Naive thymus-derived CD8-positive, alpha-beta T cell (primary cell): ENCODE measurements at regions of chr2 and their contacts with region 1.

Region 1: DNA sequence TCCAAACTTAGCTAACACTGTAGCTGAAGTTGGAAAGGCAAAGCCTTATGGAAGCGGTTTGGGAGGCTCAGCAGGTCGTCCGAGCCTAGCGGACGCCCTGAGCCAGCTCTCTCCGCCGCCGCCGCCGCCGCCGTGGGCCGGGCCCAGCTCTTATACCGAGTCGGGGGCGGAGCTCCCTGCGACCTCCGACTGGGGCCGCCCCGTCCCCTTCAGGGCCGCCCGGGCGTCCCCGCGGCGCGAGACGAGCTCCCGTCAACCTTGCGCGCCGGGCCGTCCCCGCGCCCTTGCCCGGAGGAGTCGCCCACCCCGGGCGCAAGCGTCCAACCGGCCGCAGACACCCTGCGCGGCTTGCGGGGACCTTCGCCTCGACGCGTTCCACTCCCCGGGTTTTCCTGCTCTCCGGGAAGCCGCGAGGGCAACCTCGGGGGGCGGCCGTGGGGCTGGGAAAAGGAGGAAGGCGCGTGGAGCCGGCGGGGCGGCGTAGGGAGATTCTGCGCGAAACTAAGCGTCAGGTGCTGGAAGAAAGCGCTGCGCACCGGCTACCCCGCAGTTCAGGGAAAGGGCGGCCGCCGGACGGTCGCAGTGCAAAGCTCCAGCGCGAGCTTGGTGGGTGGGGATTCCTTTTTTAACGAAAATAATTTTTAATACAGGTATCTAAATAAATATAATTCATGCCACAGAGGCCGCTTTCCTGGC is at the start of gene SLC40A1:
- DNase-seq: peak; percentile 38 to 78 (median 62)
- ATAC-seq: peak; percentile 93 to 95
- H3K4me3 Mint-ChIP-seq: peak within 1 kb of the TSS; percentile 81 to 97 (median 90)
- H3K27ac Mint-ChIP-seq: peak within 1 kb of the TSS; percentile 32 to 94 (median 86)
- H3K4me1 Mint-ChIP-seq: peaks cover 20 to 38% (median 33%) of the 10 kb centered on the region in 4 donors
- H3K27me3 Mint-ChIP-seq: peaks cover 0 to 23% (median 8%) of the 10 kb centered on the region in 5 donors
- polyA plus RNA-seq, gene SLC40A1: 33.8 to 40.3 (median 37.4) TPM

Region 2: DNA sequence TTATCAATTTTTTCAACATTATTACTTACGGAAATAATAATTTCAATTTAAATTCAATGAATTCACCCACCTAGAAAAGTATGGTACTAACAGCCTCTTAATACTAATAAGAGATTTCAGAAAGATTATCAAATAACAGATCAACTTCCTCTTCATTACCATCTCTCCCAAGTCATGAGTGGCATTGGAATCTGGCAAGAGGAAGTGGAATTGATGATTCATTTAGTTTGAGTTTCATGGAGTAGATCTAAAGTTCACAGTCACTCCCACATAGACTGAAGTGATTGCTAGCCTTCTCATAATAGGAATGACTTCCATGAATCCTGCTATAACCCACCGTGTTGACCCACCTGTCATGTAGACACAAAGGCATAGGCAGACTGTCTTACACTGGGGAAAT is 217.2 kb before region 1 on chr2:
- POLR2A ChIA-PET with region 1: no interaction called
- DNase-seq: no peak
- ATAC-seq: no peak
- H3K4me3 Mint-ChIP-seq: no peak overlapping the region
- H3K27ac Mint-ChIP-seq: no peak overlapping the region
- H3K4me1 Mint-ChIP-seq: peaks cover 0 to 8% (median 2%) of the 10 kb centered on the region in 4 donors
- H3K27me3 Mint-ChIP-seq: no peaks in the 10 kb centered on the region

Region 3: DNA sequence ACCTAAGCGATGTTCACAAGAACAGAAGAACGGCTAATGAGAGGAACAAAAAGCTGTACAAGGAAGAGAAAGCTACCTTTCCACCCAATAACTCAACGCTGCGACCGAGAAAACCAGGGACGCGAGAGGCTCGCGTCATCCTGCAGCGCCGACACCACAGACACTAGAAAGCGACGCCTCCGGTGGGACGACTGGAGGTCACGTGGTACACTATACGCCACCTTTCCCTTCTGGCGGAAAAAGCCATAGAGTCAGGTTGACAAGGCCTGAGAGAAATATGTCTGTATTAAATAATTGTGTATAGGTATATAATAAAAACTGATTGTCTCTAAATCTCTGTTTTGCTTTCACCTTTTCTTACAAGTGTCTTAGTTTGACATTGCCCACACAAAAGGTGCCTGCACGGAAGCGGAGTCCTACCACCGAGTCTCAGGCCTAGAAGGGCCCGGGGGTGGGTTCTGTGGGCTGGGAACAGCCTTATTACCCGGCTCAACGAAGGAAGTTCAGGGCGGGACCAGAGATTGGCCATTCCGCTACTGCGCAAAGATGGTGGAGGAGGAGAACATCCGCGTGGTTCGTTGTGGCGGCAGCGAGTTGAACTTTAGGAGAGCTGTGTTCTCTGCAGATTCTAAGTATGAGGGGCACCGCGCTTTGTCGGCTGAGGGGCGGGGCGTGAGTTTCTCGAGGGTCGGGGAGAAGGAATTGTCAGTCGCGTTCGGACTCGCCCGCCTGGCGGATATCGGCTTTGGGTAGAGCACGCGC is 139.7 kb before region 1 on chr2 and contains the start of gene WDR75:
- POLR2A ChIA-PET with region 1: interaction called, 17 read pairs
- DNase-seq: peak; percentile 76 to 97 (median 90)
- ATAC-seq: peak; percentile 93
- H3K4me3 Mint-ChIP-seq: peak within 1 kb of the TSS in 4 of 10 donors; percentile 97 to 100 (median 100)
- H3K27ac Mint-ChIP-seq: peak within 1 kb of the TSS in 9 of 10 donors; percentile 99 to 100 (median 100)
- H3K4me1 Mint-ChIP-seq: peaks cover 0 to 19% (median 11%) of the 10 kb centered on the region in 4 donors
- H3K27me3 Mint-ChIP-seq: no peaks in the 10 kb centered on the region
- polyA plus RNA-seq, gene WDR75: 8.3 to 17.5 (median 9.5) TPM

Region 4: GRCh38 chr2:189542154-189542882 is 38.5 kb before region 1 on chr2:
- POLR2A ChIA-PET with region 1: no interaction called
- DNase-seq: no peak
- ATAC-seq: no peak
- H3K4me3 Mint-ChIP-seq: no peak overlapping the region
- H3K27ac Mint-ChIP-seq: no peak overlapping the region
- H3K4me1 Mint-ChIP-seq: no peaks in the 10 kb centered on the region
- H3K27me3 Mint-ChIP-seq: peaks cover 0 to 7% (median 3%) of the 10 kb centered on the region in 5 donors

Region 5: GRCh38 chr2:189569295-189569910 is 11.4 kb before region 1 on chr2:
- POLR2A ChIA-PET with region 1: interaction called, 15 read pairs
- DNase-seq: peak in 1 of 10 donors; percentile 50
- ATAC-seq: no peak
- H3K4me3 Mint-ChIP-seq: peak overlapping the region in 6 of 10 donors; percentile 0 to 53 (median 4)
- H3K27ac Mint-ChIP-seq: peak overlapping the region; percentile 70 to 92 (median 82)
- H3K4me1 Mint-ChIP-seq: peaks cover 12 to 30% (median 27%) of the 10 kb centered on the region in 4 donors
- H3K27me3 Mint-ChIP-seq: no peaks in the 10 kb centered on the region

Region 6: GRCh38 chr2:189592353-189592984 is 11.7 kb after region 1 on chr2:
- POLR2A ChIA-PET with region 1: interaction called, 15 read pairs
- DNase-seq: peak in 1 of 10 donors; percentile 11
- ATAC-seq: peak; percentile 37 to 53
- H3K4me3 Mint-ChIP-seq: peak overlapping the region in 8 of 10 donors; percentile 0 to 64 (median 43)
- H3K27ac Mint-ChIP-seq: peak overlapping the region in 6 of 10 donors; percentile 8 to 80 (median 62)
- H3K4me1 Mint-ChIP-seq: peaks cover 19 to 23% (median 22%) of the 10 kb centered on the region in 4 donors
- H3K27me3 Mint-ChIP-seq: peaks cover 0 to 3% (median 0%) of the 10 kb centered on the region in 5 donors

Region 7: DNA sequence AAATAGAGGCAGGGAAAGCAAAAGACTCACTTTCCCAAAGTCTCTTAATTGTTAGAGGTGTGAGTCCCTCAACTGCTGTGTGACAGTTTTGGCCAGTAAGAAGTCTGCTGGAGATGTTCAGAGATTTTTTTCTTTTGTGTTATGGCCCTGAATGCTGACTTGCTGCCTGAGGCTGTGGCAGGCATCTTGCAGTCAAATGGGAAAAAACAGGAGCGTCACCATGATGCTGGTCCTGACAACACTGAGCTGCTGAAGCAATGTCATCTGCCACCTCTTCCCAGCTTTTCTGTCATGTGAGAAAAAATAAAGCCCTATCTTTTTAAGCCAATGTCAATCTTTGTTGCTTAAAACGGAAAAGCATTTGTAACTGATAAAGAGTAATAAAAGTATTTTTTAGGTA is 22.1 kb after region 1 on chr2:
- POLR2A ChIA-PET with region 1: no interaction called
- DNase-seq: no peak
- ATAC-seq: no peak
- H3K4me3 Mint-ChIP-seq: no peak overlapping the region
- H3K27ac Mint-ChIP-seq: peak overlapping the region in 1 of 10 donors; percentile 9
- H3K4me1 Mint-ChIP-seq: no peaks in the 10 kb centered on the region
- H3K27me3 Mint-ChIP-seq: no peaks in the 10 kb centered on the region

Region 8: GRCh38 chr2:189661148-189661956 is 80.5 kb after region 1 on chr2 and contains the start of gene ASNSD1:
- POLR2A ChIA-PET with region 1: interaction called, 34 read pairs
- DNase-seq: peak; percentile 94 to 100 (median 100)
- ATAC-seq: peak; percentile 85 to 87
- H3K4me3 Mint-ChIP-seq: no peak within 1 kb of the TSS
- H3K27ac Mint-ChIP-seq: no peak within 1 kb of the TSS
- H3K4me1 Mint-ChIP-seq: peaks cover 22 to 55% (median 45%) of the 10 kb centered on the region in 4 donors
- H3K27me3 Mint-ChIP-seq: no peaks in the 10 kb centered on the region
- polyA plus RNA-seq, gene ASNSD1: 44.0 to 73.7 (median 49.4) TPM

Region 9: GRCh38 chr2:189762551-189763298 is 181.9 kb after region 1 on chr2 and contains the start of gene OSGEPL1:
- POLR2A ChIA-PET with region 1: interaction called, 18 read pairs
- DNase-seq: peak; percentile 76 to 96 (median 90)
- ATAC-seq: peak; percentile 94
- H3K4me3 Mint-ChIP-seq: peak within 1 kb of the TSS; percentile 92 to 99 (median 97)
- H3K27ac Mint-ChIP-seq: peak within 1 kb of the TSS; percentile 95 to 99 (median 98)
- H3K4me1 Mint-ChIP-seq: peaks cover 4 to 24% (median 8%) of the 10 kb centered on the region in 4 donors
- H3K27me3 Mint-ChIP-seq: no peaks in the 10 kb centered on the region
- polyA plus RNA-seq, gene OSGEPL1: 17.0 to 22.5 (median 18.3) TPM